ENCODE measurements at regions of chr17 and their contacts with region 1.

Region 1: GRCh38 chr17:7136266-7136877 is 21.8 kb upstream of the ASGR2 start:
- DNase-seq: peak in 4 of 5 donors; percentile 65 to 88 (median 84)
- H3K4me3 ChIP-seq: peak overlapping the region in 1 of 3 donors; percentile 3
- H3K27ac ChIP-seq: no peak overlapping the region
- H3K4me1 ChIP-seq: no peaks in the 10 kb centered on the region
- H3K27me3 ChIP-seq: no peaks in the 10 kb centered on the region
- CTCF ChIP-seq: peak; percentile 95

Region 2: DNA sequence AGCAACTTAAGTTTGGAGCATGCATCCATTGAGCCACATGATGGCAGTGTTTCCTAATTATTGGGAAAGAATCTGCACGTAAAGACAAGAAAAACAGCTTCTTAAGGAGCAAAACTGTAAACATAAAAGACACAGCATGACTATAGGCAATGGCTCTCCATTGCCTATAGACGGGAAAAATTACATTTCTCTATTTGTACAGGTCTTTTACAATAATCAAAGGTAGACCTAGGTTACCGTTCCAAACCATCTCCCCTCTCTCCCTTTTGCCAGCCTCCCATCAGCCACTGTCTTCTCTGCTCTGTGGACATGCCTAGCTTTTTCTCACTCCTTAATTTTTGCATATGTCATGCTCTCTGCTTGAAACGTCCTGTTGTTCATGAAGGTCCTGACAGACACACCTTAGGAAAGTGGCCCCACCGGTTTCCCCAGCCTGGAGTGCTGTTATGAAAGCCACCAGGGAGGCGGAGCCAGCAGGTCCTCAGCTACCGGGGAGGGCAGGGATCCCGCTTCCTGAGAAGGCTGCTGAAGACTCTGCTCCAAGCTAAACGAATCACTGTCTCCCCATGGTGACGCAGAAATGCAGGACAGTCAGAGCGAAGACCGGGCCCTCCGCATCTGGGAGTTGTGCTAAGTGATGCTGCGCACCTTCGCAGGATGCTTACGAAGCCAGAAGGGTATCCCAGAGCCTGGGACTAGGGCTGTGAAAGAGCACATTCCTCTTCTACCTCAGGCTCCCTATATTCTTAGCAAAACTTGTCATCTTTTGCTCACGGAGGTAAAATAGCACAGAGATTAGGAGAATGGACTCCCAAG is 90.3 kb before region 1 on chr17:
- intact Hi-C with region 1: loop called (anchors 5 kb)
- DNase-seq: peak; percentile 64 to 94 (median 92)
- H3K4me3 ChIP-seq: peak overlapping the region; percentile 25 to 40 (median 35)
- H3K27ac ChIP-seq: peak overlapping the region in 1 of 2 donors; percentile 51
- H3K4me1 ChIP-seq: peaks cover 3 to 20% (median 10%) of the 10 kb centered on the region in 3 donors
- H3K27me3 ChIP-seq: peaks cover 7% of the 10 kb centered on the region
- CTCF ChIP-seq: peak; percentile 79

Measured in kidney (tissue), 22 donors.